ENCODE measurements at regions of chr20 and their contacts with region 1.

Region 1: GRCh38 chr20:45890985-45891983 is at the starts of genes CTSA and NEURL2:
- DNase-seq: peak; percentile 96 to 98 (median 97)
- ATAC-seq: peak; percentile 93
- H3K4me3 ChIP-seq: peak within 1 kb of the TSS; percentile 69
- H3K27ac ChIP-seq: peak within 1 kb of the TSS; percentile 74
- H3K4me1 ChIP-seq: peaks cover 11 to 40% of the 10 kb centered on the region in 2 experiments
- H3K27me3 ChIP-seq: no peaks in the 10 kb centered on the region
- CTCF ChIP-seq: peak in 2 of 3 experiments; percentile 30 to 39; a peak in 3 of 6 replicates
- EP300 ChIP-seq: peak; percentile 42; the same call in 1 of the 2 replicates
- POLR2A ChIP-seq: peak; percentile 78
- RAD21 ChIP-seq: peak; percentile 63 to 65
- polyA plus RNA-seq, gene CTSA: 8.8 to 12.4 TPM
- polyA plus RNA-seq, gene NEURL2: 0.30 to 0.32 TPM

Region 2: GRCh38 chr20:45798935-45799642 is 92.2 kb before region 1 on chr20:
- CTCF ChIA-PET with region 1: interaction called, 9 read pairs
- POLR2A ChIA-PET with region 1: interaction called, 4 read pairs
- in situ Hi-C with region 1: no loop called
- intact Hi-C with region 1: loop called (anchors 5 kb)
- DNase-seq: peak; percentile 45 to 81 (median 62)
- ATAC-seq: peak; percentile 98
- H3K4me3 ChIP-seq: no peak overlapping the region
- H3K27ac ChIP-seq: peak overlapping the region; percentile 47; the same call in 1 of the 3 replicates
- H3K4me1 ChIP-seq: peaks cover 0 to 6% of the 10 kb centered on the region in 2 experiments; a peak in 1 of 5 replicates
- H3K27me3 ChIP-seq: no peaks in the 10 kb centered on the region
- CTCF ChIP-seq: peak; percentile 79 to 88 (median 86)
- EP300 ChIP-seq: no peak
- POLR2A ChIP-seq: no peak
- RAD21 ChIP-seq: peak; percentile 81 to 89

Region 3: GRCh38 chr20:45867819-45868176 is 23.5 kb before region 1 on chr20:
- CTCF ChIA-PET with region 1: no interaction called
- POLR2A ChIA-PET with region 1: no interaction called
- in situ Hi-C with region 1: no loop called
- intact Hi-C with region 1: no loop called
- DNase-seq: no peak
- ATAC-seq: no peak
- H3K4me3 ChIP-seq: no peak overlapping the region
- H3K27ac ChIP-seq: no peak overlapping the region
- H3K4me1 ChIP-seq: no peaks in the 10 kb centered on the region; a peak in 1 of 5 replicates
- H3K27me3 ChIP-seq: no peaks in the 10 kb centered on the region
- CTCF ChIP-seq: no peak
- EP300 ChIP-seq: no peak
- POLR2A ChIP-seq: no peak
- RAD21 ChIP-seq: no peak

Region 4: DNA sequence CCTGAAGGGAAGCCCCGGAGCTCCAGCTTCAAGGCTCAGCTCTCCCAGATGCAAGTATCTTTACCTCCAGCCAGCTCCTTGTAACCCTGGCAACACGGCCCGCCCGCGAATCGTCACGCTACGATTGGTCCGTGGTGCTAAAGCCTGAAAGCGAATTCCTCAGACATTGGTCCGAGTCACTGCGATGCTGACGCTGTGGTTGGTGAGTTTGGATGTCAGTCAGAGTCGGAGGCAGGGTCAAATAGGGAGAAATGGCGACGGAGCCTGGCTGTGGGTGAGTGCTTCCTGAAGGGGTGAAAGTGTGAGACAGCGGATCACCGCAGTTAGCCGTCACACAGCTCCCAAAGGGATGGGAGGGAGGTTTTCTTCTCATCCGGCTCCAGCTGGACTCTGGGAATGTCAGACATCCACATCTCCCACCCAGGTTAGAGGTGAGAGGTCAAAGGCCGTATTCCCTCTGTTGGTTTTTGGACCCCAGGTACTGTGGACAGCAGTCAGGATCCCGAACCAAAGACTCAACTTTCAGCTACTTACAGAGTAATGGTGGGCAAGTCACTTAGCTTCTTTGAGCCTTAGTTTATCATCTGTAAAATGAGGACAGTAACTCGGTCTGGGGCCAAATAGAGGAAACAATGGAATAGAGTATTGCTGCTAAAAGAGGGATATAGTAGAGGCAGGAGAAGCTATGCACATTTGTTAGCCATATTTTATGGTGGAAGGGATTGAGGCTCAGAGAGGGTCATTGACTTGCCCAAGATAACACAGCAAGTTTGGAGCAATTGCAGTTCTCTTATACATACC is 10.1 kb before region 1 on chr20 and contains the start of gene ZSWIM1:
- CTCF ChIA-PET with region 1: no interaction called
- POLR2A ChIA-PET with region 1: interaction called, 11 read pairs
- in situ Hi-C with region 1: no loop called
- intact Hi-C with region 1: no loop called
- DNase-seq: peak; percentile 99 to 100 (median 99)
- ATAC-seq: peak; percentile 99
- H3K4me3 ChIP-seq: peak within 1 kb of the TSS; percentile 56
- H3K27ac ChIP-seq: peak within 1 kb of the TSS; percentile 83
- H3K4me1 ChIP-seq: peaks cover 27% of the 10 kb centered on the region in 2 experiments
- H3K27me3 ChIP-seq: no peaks in the 10 kb centered on the region
- CTCF ChIP-seq: no peak
- EP300 ChIP-seq: no peak
- POLR2A ChIP-seq: peak; percentile 97
- RAD21 ChIP-seq: 0 out of 4 replicates have a peak, but pooled peaks of 1 of the 2 experiments have one; percentile 24
- polyA plus RNA-seq, gene ZSWIM1: 2.5 to 3.1 TPM

Region 5: GRCh38 chr20:45910670-45911485 is 19.6 kb after region 1 on chr20:
- CTCF ChIA-PET with region 1: no interaction called
- POLR2A ChIA-PET with region 1: interaction called, 13 read pairs
- in situ Hi-C with region 1: no loop called
- intact Hi-C with region 1: no loop called
- DNase-seq: peak; percentile 98 to 100 (median 98)
- ATAC-seq: peak; percentile 95
- H3K4me3 ChIP-seq: peak overlapping the region; percentile 48
- H3K27ac ChIP-seq: peak overlapping the region; percentile 89
- H3K4me1 ChIP-seq: peaks cover 24 to 44% of the 10 kb centered on the region in 2 experiments
- H3K27me3 ChIP-seq: no peaks in the 10 kb centered on the region
- CTCF ChIP-seq: no peak
- EP300 ChIP-seq: peak; percentile 82
- POLR2A ChIP-seq: peak; percentile 92
- RAD21 ChIP-seq: no peak

Region 6: GRCh38 chr20:45963059-45964005 is 72.0 kb after region 1 on chr20:
- CTCF ChIA-PET with region 1: interaction called, 9 read pairs
- POLR2A ChIA-PET with region 1: no interaction called
- in situ Hi-C with region 1: no loop called
- intact Hi-C with region 1: loop called (anchors 5 kb)
- DNase-seq: peak in 3 of 4 experiments; percentile 15 to 64 (median 33)
- ATAC-seq: peak; percentile 86
- H3K4me3 ChIP-seq: no peak overlapping the region
- H3K27ac ChIP-seq: no peak overlapping the region
- H3K4me1 ChIP-seq: peaks cover 0 to 16% of the 10 kb centered on the region in 2 experiments; a peak in 2 of 5 replicates
- H3K27me3 ChIP-seq: no peaks in the 10 kb centered on the region
- CTCF ChIP-seq: peak; percentile 43 to 66 (median 53); a peak in 5 of 6 replicates
- EP300 ChIP-seq: no peak
- POLR2A ChIP-seq: no peak
- RAD21 ChIP-seq: peak; percentile 69 to 80

Measured in K562 (cell line).